ENCODE measurements at regions of chr1 and their contacts with region 1.

Region 1: DNA sequence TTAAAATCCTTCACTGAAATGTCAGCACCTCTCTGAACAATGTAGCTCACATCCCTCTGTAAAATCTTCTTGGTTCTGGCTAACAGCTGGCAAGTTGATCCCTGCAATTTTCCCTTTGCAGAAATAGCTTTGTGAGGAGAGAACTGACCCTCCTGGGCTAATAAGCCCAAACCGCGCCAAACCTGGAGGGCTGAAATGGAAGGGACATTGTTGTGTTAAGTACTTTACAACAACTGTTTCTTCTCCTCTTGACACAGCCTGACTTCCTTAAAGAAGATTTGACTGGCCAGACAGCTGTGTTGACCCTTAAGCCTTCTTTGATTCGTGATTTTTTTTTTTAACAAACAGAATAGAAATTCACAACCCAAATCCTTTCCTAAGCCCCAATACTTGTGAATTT is 5.7 kb downstream of the LMX1A start:
- DNase-seq: no peak
- ATAC-seq: no peak
- H3K4me3 Mint-ChIP-seq: no peak overlapping the region
- H3K27ac Mint-ChIP-seq: no peak overlapping the region
- H3K4me1 Mint-ChIP-seq: peaks cover 3% of the 10 kb centered on the region
- H3K27me3 Mint-ChIP-seq: peaks cover 72% of the 10 kb centered on the region
- CTCF ChIP-seq: no peak

Region 2: GRCh38 chr1:165114022-165114888 is 236.6 kb before region 1 on chr1:
- CTCF ChIA-PET with region 1: no interaction called
- POLR2A ChIA-PET with region 1: no interaction called
- intact Hi-C with region 1: no loop called
- DNase-seq: no peak
- ATAC-seq: no peak
- H3K4me3 Mint-ChIP-seq: no peak overlapping the region
- H3K27ac Mint-ChIP-seq: no peak overlapping the region
- H3K4me1 Mint-ChIP-seq: no peaks in the 10 kb centered on the region
- H3K27me3 Mint-ChIP-seq: peaks cover 29% of the 10 kb centered on the region
- CTCF ChIP-seq: peak; percentile 38

Region 3: GRCh38 chr1:165191087-165191486 is 159.8 kb before region 1 on chr1:
- CTCF ChIA-PET with region 1: no interaction called
- POLR2A ChIA-PET with region 1: no interaction called
- intact Hi-C with region 1: no loop called
- DNase-seq: no peak
- ATAC-seq: no peak
- H3K4me3 Mint-ChIP-seq: no peak overlapping the region
- H3K27ac Mint-ChIP-seq: no peak overlapping the region
- H3K4me1 Mint-ChIP-seq: no peaks in the 10 kb centered on the region
- H3K27me3 Mint-ChIP-seq: no peaks in the 10 kb centered on the region
- CTCF ChIP-seq: no peak

Region 4: GRCh38 chr1:165367375-165367993 is 16.6 kb after region 1 on chr1:
- CTCF ChIA-PET with region 1: interaction called, 11 read pairs
- POLR2A ChIA-PET with region 1: no interaction called
- intact Hi-C with region 1: no loop called
- DNase-seq: peak; percentile 51
- ATAC-seq: peak; percentile 75
- H3K4me3 Mint-ChIP-seq: no peak overlapping the region
- H3K27ac Mint-ChIP-seq: no peak overlapping the region
- H3K4me1 Mint-ChIP-seq: peaks cover 3% of the 10 kb centered on the region
- H3K27me3 Mint-ChIP-seq: peaks cover 59% of the 10 kb centered on the region
- CTCF ChIP-seq: no peak

Region 5: DNA sequence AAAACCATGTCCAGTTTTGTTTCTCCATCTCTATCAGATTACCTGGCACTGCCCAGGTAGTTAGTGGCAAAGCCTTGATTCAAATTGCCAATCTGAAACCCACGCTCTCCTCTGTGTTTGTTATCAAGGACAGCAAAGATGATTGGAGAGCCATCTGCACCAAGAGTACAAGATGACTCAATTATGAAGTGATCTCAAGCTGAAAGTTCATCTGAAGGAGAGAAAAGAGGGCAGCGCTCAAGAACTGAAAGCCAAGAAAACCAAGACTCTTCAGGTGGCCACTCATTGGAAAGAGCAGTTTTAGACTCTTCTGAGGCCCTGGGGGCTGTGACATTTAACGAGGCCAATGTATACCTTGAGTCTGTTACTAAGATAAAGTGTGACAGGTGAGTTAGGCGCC is 80.2 kb after region 1 on chr1:
- CTCF ChIA-PET with region 1: no interaction called
- POLR2A ChIA-PET with region 1: no interaction called
- intact Hi-C with region 1: no loop called
- DNase-seq: no peak
- ATAC-seq: no peak
- H3K4me3 Mint-ChIP-seq: no peak overlapping the region
- H3K27ac Mint-ChIP-seq: no peak overlapping the region
- H3K4me1 Mint-ChIP-seq: no peaks in the 10 kb centered on the region
- H3K27me3 Mint-ChIP-seq: peaks cover 22% of the 10 kb centered on the region
- CTCF ChIP-seq: no peak

Region 6: DNA sequence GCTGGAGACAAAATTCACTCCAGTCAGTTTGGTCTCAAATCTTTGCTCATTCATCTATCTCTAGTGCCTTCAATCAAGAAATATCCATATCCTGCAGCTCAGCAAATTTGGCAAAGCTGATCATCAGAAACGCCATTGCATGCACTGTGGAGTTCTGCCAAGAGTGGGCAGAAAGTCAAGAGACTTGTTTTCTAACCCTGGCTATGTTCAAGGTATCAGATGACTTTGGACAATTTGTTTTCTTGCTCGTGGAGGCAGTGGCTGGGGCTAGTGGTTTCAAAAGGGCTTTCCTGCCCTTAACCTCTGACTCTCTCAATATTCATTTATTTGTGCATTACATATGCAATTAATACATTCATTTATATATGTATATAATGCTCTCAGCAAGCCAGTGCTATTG is 180.2 kb after region 1 on chr1:
- CTCF ChIA-PET with region 1: no interaction called
- POLR2A ChIA-PET with region 1: no interaction called
- intact Hi-C with region 1: no loop called
- DNase-seq: no peak
- ATAC-seq: no peak
- H3K4me3 Mint-ChIP-seq: no peak overlapping the region
- H3K27ac Mint-ChIP-seq: no peak overlapping the region
- H3K4me1 Mint-ChIP-seq: no peaks in the 10 kb centered on the region
- H3K27me3 Mint-ChIP-seq: peaks cover 30% of the 10 kb centered on the region
- CTCF ChIP-seq: no peak

Measured in activated B cell treated with CpG ODN at 0.5 μM for 24 hours (primary cell).